PC-3 (cell line): ENCODE measurements at regions of chr16 and their contacts with region 1.

Region 1: GRCh38 chr16:21590287-21590686 is 9.1 kb upstream of the METTL9 start:
- DNase-seq: peak; percentile 89
- ATAC-seq: peak; percentile 91
- H3K4me3 ChIP-seq: peak overlapping the region; percentile 28; the same call in 1 of the 2 replicates
- H3K27ac ChIP-seq: peak overlapping the region; percentile 85
- H3K4me1 ChIP-seq: peaks cover 27% of the 10 kb centered on the region
- H3K27me3 ChIP-seq: no peaks in the 10 kb centered on the region
- CTCF ChIP-seq: no peak

Region 2: DNA sequence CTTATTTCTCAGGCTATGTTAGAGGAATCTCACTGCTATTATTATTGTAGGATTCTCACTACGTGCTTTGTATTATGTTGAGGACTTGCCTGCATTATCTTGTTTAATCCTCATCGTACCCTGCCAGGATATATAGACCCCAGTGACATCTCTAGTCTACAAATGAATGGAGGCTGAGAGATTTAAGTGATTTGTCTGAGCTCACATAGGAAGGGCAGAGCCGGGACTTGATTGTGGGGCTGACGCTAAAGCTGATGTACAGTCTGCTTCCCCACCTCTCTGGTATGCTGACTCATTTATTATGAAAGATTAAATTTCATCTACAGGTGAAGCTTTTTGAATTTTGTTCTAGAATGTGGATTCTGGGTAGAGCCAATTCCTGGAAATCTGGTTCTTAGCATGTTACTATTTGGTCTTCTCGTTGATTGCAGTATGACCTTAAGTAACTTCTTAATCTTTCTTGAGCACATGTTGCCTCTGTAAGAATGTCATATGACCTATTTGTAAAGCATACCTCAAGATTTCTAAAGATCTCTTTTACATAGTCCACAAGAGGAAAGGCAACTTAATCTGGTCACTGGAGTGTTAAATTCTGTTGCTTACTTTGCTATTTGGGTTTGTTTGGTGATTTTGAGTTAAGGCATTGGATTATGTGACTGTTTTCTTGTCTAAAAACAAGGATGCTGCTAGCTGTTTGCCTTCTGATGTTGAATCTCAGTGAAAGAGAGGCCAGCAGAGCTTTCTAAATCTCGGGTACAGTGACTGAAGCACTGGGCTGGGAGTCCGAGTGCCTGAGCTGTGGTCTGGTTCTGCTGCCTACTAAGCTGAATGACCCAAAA is 21.5 kb after region 1 on chr16:
- CTCF ChIA-PET with region 1: no interaction called
- POLR2A ChIA-PET with region 1: no interaction called
- intact Hi-C with region 1: no loop called
- DNase-seq: peak; percentile 23
- ATAC-seq: no peak
- H3K4me3 ChIP-seq: no peak overlapping the region
- H3K27ac ChIP-seq: no peak overlapping the region
- H3K4me1 ChIP-seq: peaks cover 26% of the 10 kb centered on the region
- H3K27me3 ChIP-seq: no peaks in the 10 kb centered on the region
- CTCF ChIP-seq: no peak

Region 3: GRCh38 chr16:21638573-21638975 is 48.3 kb after region 1 on chr16:
- CTCF ChIA-PET with region 1: interaction called, 3 read pairs
- POLR2A ChIA-PET with region 1: no interaction called
- intact Hi-C with region 1: loop called (anchors 1 kb)
- DNase-seq: peak; percentile 82
- ATAC-seq: peak; percentile 98
- H3K4me3 ChIP-seq: peak overlapping the region; percentile 27; the same call in 1 of the 2 replicates
- H3K27ac ChIP-seq: peak overlapping the region; percentile 71
- H3K4me1 ChIP-seq: peaks cover 33% of the 10 kb centered on the region
- H3K27me3 ChIP-seq: no peaks in the 10 kb centered on the region
- CTCF ChIP-seq: no peak